Right cardiac atrium (tissue), 5 donors: ENCODE measurements at regions of chr7 and their contacts with region 1.

Region 1: DNA sequence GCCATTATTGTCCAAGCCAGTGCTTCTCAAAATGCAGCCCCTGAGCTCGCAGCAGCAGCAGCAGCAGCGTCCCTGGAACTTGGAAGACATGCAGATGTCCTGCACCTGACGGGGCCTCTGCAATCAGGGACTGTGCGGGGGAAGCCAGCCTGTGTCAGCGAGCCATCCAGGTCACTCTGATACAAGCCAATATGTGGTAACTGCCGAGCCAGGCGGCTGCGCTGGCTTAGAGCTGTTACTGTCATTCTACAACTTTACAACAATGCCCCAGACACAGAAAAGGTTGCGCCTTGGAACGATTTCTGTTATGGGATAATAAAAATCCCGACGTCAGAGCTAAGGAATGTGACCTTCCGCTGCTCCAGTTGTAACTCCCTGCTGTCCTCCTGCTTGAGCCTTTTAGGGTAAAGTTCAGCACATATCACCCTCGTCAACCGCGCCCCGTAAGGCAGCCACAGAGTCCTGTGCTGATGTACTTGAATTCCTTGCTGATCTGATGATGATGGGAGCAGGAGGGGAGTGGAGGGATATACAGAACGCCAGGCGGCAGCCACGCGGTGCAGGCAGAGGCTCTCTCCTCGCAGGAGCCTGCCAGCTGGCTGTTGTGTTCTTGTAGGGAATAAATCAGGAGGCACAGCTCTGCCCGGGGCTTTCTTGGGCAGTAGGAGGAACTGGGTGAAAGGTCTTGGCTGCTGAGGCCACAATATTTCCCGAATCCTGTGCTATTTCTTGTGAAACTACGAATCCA is 20.0 kb upstream of the CRYGN start:
- DNase-seq: peak; percentile 89 to 92 (median 90)
- ATAC-seq: peak; percentile 90 to 92
- H3K4me3 ChIP-seq: no peak overlapping the region
- H3K27ac ChIP-seq: peak overlapping the region; percentile 99
- H3K4me1 ChIP-seq: peaks cover 14% of the 10 kb centered on the region
- H3K27me3 ChIP-seq: no peaks in the 10 kb centered on the region

Region 2: DNA sequence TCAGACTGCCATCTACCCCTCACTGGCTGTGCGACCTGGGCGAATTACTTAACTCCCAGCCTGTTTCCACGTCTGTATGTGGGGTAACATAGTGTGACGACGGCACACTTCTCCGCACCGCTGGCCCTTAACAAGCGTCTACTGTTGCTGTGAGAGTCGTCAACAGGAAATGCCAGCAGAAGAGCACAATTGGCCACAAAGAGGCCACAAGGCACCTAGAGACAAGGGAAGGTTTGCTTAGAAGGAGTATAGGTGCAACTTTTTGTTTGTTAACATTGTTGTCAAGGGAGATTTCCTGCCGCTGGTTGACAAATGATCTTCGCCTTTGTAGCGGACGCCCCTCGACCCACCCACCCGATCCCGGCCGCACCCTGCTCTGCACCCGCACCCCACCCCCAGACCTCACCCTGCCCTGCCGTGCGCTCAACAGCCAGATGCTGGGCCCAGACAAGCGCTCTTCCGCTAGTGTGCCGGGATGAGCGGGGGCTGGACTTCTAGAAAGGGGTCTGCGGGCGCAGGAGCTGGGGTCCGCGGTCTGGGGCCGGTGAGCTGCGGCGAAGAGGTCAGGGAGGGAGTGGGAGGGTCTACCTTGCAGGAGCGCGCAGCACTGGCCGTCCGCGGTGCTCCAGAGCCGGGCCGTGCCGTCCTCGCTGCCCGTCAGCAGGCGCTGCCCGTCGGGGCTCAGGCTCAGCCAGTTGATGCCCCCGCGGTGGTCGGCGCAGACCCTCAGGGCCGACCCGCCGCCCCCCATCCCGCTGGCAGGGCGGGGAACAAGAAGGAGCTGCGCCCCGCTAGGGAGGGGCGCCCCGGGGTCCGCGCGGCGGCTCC is 50.8 kb before region 1 on chr7:
- intact Hi-C with region 1: no loop called
- DNase-seq: peak in 2 of 3 donors; percentile 39 to 42
- ATAC-seq: no peak
- H3K4me3 ChIP-seq: peak overlapping the region; percentile 53
- H3K27ac ChIP-seq: no peak overlapping the region
- H3K4me1 ChIP-seq: no peaks in the 10 kb centered on the region
- H3K27me3 ChIP-seq: no peaks in the 10 kb centered on the region

Region 3: GRCh38 chr7:151558575-151558974 is 98.7 kb after region 1 on chr7:
- intact Hi-C with region 1: no loop called
- DNase-seq: no peak
- ATAC-seq: no peak
- H3K4me3 ChIP-seq: no peak overlapping the region
- H3K27ac ChIP-seq: no peak overlapping the region
- H3K4me1 ChIP-seq: no peaks in the 10 kb centered on the region
- H3K27me3 ChIP-seq: no peaks in the 10 kb centered on the region

Region 4: GRCh38 chr7:151736403-151736909 is 276.6 kb after region 1 on chr7:
- intact Hi-C with region 1: loop called in 1 of 4 experiments (anchors 10 kb)
- DNase-seq: peak; percentile 78 to 86 (median 81)
- ATAC-seq: peak; percentile 88 to 89
- H3K4me3 ChIP-seq: peak overlapping the region; percentile 62
- H3K27ac ChIP-seq: peak overlapping the region; percentile 91
- H3K4me1 ChIP-seq: no peaks in the 10 kb centered on the region
- H3K27me3 ChIP-seq: no peaks in the 10 kb centered on the region